ENCODE measurements at regions of chr19 and their contacts with region 1.

Region 1: DNA sequence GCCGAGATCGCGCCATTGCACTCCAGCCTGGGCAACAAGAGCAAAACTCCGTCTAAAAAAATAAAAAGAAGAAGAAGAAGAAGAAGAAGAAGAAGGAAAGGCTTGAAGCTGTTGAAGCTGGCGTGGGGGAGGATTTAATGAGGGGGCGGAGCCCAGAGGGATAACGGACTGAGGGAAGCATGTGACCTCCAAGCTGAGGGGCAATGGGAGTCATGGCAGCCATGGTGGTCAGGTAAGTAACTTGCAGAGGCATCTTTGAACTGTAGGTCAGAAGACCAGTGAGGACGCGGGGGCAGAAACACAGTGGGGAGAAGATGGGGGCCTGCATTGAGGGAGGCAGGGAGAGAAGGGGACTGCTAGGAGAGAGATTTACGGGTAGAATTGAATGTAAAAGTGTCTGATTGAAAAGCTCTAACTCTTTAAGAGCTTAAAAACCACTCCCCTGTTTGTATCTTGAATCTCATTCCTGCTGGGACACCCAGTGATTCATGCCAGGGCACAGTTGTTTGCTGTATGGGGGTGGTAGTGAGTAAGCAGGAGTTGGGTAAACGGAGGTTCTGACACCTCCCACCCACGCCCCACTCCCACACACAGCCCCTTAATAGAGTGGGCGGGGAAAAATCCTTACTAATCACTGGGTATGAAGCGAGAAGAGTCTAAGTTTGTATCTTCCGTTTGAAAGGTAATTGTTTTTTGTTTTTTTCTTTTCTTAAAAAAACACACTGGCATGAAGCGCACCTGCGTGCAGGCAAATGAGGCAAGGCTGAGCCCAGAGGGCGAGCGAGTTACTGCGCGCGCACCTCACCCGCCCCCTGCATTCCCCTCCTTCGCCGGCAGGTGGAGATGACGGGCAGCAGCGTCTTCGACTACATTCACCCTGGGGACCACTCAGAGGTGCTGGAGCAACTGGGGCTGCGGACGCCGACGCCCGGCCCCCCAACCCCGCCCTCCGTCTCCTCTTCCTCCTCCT is 13.0 kb downstream of the TMEM160 start:
- H3K4me3 ChIP-seq: peak overlapping the region; percentile 40
- H3K27ac ChIP-seq: peak overlapping the region; percentile 80
- H3K4me1 ChIP-seq: peaks cover 17% of the 10 kb centered on the region
- CTCF ChIP-seq: peak; percentile 97

Region 2: GRCh38 chr19:46963093-46963734 is 72.2 kb before region 1 on chr19:
- CTCF ChIA-PET with region 1: no interaction called
- POLR2A ChIA-PET with region 1: no interaction called
- H3K4me3 ChIP-seq: no peak overlapping the region
- H3K27ac ChIP-seq: no peak overlapping the region
- H3K4me1 ChIP-seq: no peaks in the 10 kb centered on the region
- CTCF ChIP-seq: no peak

Region 3: DNA sequence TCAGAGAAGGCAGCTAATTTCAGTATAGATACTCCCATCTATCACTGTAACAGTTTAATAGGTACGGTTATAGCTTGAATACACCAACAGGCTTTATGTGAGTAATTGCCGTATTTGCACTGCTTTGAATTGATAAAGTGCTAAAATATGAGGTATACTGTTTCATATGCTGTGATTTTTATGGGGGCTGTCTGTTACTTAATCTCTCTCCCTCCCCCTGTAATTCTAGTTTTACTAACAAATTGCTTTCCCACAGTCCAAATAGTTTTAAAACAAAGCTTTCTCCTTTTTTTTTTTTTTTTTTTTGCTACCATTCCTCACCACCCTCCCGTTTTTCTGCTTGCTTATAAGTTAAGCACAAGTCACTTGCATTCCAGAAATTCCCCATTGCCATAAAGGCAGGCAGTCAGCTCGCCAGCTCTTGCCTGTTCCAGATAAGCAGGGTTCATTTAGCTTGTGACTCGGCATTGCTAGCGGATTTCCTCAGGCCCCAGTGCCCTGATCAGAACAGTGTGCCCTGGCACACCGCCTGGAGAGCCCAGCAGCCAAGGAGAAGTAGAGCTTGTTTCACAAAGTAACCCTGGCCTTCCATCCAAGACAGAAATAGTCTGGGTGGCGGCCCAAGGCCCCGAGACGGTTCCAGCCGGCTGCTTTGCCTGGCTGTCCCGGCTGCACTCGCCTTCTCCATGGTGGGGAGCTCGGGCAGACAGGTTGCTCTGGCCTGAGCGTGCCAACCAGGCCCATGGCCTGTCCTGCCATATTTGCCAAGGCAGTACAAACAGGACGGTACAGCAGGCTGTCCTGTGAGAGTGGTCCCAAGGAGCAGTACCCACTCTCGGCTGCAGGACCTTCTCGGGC is 59.3 kb before region 1 on chr19:
- CTCF ChIA-PET with region 1: no interaction called
- POLR2A ChIA-PET with region 1: no interaction called
- H3K4me3 ChIP-seq: no peak overlapping the region
- H3K27ac ChIP-seq: peak overlapping the region; percentile 42
- H3K4me1 ChIP-seq: peaks cover 18% of the 10 kb centered on the region
- CTCF ChIP-seq: no peak

Region 4: DNA sequence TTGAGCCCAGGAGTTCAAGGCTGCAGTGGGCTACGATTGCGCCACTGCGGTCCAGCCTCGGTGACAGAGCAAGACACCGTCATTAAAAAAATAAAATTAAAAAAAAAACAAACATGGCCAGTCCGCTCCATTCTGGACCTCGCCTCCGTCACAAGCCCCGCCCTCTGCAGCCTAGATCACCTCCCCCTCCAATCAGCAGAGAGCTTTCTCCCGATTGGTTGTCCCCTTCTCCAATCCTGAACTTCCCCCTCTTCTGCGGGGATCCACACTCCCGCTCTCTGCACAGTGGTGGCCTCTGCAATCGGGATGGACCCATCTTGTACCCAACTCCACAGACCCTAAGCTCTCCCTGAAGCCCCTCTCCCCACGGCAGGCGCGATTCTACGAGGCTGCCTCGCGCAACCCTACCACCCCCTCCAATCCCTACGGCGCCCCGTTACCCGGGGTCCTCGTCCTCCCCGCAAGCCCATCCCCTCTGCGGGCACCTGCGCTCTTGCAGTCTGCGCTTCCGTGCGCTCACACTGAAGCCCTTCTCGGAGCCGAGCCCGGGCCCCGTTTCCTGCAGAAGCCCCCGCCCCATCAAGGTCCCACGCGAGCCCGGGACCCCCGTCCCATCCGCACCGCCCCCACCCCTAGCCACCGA is 12.5 kb after region 1 on chr19:
- CTCF ChIA-PET with region 1: interaction called, 12 read pairs
- POLR2A ChIA-PET with region 1: interaction called, 10 read pairs
- H3K4me3 ChIP-seq: peak overlapping the region; percentile 70
- H3K27ac ChIP-seq: peak overlapping the region; percentile 74
- H3K4me1 ChIP-seq: peaks cover 3% of the 10 kb centered on the region; the same call in 1 of the 2 replicates
- CTCF ChIP-seq: peak; percentile 42; the same call in 1 of the 2 replicates

Region 5: GRCh38 chr19:47089767-47090350 is 54.4 kb after region 1 on chr19:
- CTCF ChIA-PET with region 1: no interaction called
- POLR2A ChIA-PET with region 1: no interaction called
- H3K4me3 ChIP-seq: no peak overlapping the region
- H3K27ac ChIP-seq: no peak overlapping the region
- H3K4me1 ChIP-seq: no peaks in the 10 kb centered on the region
- CTCF ChIP-seq: no peak

Region 6: GRCh38 chr19:47225746-47226425 is 190.5 kb after region 1 on chr19:
- CTCF ChIA-PET with region 1: no interaction called
- POLR2A ChIA-PET with region 1: no interaction called
- H3K4me3 ChIP-seq: peak overlapping the region; percentile 91
- H3K27ac ChIP-seq: peak overlapping the region; percentile 92
- H3K4me1 ChIP-seq: peaks cover 26% of the 10 kb centered on the region
- CTCF ChIP-seq: no peak

Measured in HEK293 (cell line).